Right ventricle myocardium superior (tissue), 1 donor: ENCODE measurements at regions of chr12 and their contacts with region 1.

Region 1: GRCh38 chr12:26434299-26435068 is 239.1 kb downstream of the SSPN start:
- DNase-seq: no peak
- ATAC-seq: peak; percentile 81

Region 2: GRCh38 chr12:25977047-25977446 is 457.4 kb before region 1 on chr12:
- intact Hi-C with region 1: no loop called
- DNase-seq: no peak
- ATAC-seq: no peak

Region 3: DNA sequence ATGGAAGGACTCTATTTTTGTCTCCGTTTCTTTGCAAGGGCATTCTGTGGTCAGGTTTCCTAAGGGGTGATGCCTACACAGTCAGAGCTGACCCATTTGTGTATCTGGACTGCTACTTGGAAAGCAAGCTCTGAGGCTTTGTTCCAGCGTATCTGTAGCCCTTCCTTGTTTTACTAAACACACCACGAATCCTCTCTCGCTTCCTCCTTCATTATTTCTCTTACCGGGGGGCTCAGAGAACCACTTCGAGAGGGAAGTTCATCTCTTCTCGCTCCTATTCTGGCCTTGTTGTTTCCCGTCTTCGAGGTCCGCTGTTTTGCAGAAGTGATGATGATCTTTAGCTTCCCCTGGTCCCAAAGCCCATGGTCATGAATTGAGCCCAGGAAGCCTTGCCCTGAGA is 74.4 kb before region 1 on chr12:
- intact Hi-C with region 1: no loop called
- DNase-seq: no peak
- ATAC-seq: peak; percentile 39

Region 4: GRCh38 chr12:26378711-26379110 is 55.8 kb before region 1 on chr12:
- intact Hi-C with region 1: no loop called
- DNase-seq: no peak
- ATAC-seq: peak; percentile 78

Region 5: GRCh38 chr12:26651566-26652188 is 217.2 kb after region 1 on chr12:
- intact Hi-C with region 1: loop called (anchors 10 kb)
- DNase-seq: no peak
- ATAC-seq: peak; percentile 77